ENCODE measurements at regions of chr5 and their contacts with region 1.

Region 1: DNA sequence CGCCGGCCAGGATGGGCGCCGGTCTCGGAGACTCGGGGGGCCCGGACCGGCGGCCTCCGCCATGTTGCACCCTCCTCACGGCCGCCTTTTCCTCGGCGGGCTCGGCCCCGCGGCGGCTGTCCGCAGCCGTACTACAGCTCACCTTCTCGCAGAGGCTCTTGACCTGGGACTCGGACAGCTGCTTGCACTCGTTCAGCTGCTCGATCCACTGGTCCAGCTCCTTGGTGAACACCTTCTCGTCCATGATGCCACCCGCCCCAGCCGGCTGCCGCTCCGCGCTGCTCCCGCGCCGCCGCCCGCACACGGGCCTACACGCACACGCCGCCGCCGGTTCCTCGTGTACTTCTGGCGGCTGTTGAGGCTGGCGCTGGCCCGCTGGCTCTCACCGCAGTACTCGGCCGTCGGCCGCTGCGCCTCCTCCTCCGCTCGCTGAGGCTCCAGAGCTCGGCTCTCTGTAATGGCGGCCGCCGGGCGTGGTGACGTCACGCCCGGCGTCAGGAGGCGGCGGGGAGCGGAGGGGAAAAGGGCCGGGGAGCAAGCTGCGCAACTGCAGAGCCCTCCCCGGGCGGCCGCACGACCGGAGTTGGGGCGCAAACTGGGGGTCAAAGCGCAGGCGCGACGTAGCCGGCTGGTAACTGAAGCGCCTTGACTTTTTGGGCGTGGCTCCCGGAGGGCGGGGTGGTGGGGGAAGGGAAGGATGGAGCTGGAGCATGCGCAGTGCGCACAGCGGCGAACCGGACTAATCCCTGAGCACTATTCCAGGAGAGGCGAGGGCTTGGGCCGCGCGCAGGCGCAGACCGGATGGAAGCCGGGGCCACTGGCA is at the start of gene PPP2CA:
- DNase-seq: peak; percentile 97
- CTCF ChIP-seq: no peak

Region 2: DNA sequence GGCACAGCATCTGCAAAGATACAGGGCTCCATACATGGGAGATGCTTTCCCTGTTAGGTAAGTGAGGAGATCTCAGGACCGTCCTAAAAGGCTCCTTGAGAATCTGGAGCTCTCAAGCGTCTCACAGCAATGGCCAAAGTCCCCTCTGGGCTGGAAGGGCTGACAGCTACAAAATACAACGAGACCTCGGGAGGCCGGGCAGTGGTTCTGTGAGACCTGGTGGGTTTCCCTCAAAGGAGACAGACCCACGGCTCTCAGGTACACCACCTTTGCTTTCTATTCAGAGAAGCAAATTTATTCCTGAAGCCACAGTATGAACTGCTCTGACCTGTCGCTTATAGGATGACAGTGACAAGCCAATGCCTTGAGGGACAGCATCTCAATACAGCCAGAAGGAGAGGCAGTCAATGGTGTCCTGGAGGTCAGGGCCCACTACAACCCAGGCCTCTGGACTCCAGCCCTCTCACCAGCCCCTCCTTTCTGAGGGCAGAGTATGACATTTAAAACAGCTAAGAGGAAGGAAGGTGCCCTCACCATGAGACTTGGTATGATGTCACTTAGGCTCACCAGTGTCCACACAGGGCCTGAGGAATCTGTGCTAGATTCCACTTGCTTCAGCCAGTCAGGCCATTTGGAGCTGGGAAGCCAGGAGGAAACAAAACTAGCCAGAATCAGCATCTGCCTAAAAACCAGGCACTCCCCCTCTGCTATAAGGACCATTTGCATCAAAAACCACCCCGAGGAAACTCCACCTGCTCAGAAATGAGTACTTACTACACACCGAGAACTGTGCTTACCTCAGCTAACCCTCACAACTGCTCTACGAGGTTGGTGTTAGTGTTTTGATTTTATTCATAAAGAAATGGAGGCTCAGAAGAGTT is 526.9 kb before region 1 on chr5:
- CTCF ChIA-PET with region 1: no interaction called
- POLR2A ChIA-PET with region 1: no interaction called
- DNase-seq: peak; percentile 51
- CTCF ChIP-seq: no peak

Region 3: DNA sequence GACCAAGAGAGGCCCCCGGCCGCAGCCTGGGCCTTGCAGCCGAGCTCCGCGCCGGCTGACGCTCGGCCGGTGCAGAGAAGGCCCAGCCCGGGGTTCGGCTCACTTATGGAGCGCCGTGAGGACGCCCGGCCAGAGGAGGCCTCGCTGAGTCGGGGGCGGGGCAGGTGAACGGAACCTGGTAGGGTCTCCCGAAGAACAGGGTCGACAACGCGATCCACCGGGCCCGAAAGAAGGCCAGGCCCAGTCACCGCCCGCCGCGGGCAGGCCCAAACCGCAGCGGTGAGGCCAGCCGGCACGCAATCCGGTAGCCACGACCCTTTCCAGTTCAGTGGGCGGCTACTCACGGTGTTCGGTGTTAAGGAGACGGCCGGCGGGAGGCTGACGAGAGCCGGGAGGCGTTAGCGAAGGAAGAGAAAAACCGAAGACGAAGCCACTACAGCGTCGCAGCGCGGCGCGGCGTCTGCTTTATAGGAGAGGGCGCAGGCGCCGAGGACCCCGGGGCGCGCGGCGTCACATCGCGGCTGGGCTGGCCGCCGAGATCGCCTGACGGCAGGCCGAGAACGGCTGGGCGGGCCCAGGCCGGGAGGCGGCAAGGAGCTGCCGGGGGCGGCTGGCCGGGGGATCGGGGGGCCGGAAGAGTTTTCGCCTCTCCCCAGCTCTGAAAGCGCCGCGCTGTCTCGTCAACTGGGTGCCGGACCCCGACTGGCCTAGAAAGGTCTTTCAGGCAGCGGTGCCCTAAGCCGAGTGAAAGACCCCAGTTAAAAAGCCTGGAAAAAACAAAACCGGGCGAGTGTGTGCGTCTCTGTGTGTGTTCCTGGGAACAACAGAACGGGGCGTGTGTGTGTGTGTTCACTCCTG is 49.1 kb before region 1 on chr5 and contains the start of gene SKP1:
- CTCF ChIA-PET with region 1: no interaction called
- POLR2A ChIA-PET with region 1: interaction called, 15 read pairs
- DNase-seq: peak; percentile 92
- CTCF ChIP-seq: no peak

Region 4: GRCh38 chr5:134209477-134210240 is 16.2 kb before region 1 on chr5:
- CTCF ChIA-PET with region 1: interaction called, 34 read pairs
- POLR2A ChIA-PET with region 1: interaction called, 5 read pairs
- DNase-seq: no peak
- CTCF ChIP-seq: no peak

Region 5: DNA sequence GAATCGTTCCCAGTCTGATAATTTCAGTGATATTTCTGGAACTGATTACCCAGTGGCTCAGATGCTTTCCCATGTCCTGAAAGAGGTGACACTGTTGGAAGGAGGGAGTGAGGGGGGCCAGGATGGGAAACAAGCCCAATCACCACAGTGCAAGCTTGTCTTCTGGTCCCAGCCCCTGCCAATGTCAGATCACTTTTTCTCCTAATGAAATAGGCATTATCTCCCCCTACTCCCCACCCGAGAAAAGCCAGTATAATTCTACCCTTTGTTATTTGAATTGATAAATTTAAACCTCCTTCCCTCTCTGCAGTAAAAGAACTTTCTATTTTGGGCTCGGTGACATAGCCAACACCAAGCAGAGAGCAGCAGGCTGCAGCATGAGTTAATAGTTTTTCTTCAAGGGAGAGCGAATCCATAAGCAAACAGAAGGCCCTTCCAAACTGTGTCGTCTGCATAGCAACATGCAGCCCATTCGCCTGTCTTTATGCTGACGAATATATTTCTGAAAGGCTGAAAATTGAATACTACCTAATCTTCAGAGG is 14.7 kb after region 1 on chr5:
- CTCF ChIA-PET with region 1: interaction called, 19 read pairs
- POLR2A ChIA-PET with region 1: interaction called, 4 read pairs
- DNase-seq: no peak
- CTCF ChIP-seq: no peak